CD14-positive monocyte (primary cell): ENCODE measurements at regions of chr7 and their contacts with region 1.

Region 1: DNA sequence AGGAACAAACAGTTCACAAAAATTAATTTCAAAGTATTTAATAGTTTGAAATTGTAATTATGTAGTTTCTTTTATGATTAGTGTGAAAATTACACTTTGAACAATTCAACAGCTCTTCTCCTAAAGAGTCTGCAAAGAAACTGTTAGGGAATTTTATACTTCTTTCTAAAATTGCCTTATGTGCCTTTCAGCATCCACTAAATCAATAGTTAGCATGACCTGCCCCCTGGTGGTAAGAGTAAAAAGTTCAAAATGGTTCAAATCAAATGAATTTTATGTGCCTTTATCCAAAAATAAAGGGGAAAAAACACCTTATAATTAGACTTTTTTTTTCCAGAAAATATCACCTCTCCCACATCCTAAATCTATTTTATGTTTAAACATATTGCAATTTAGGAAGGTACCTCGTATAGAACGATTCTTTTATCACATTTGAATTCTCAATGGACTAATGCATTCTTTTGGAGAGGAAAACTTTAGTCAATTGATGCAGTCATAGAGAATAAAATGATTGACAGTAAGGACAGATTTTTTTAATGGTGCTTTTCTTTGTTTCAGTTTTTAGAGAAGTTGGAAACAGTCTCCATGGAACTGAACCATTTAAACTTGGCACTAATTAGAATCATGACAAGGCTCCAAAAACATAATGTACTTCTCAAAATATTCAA is 163.7 kb downstream of the SEMA3D start:
- DNase-seq: peak in 2 of 3 donors; percentile 7 to 17
- H3K4me3 ChIP-seq: no peak overlapping the region
- H3K4me3 Mint-ChIP-seq: no peak overlapping the region
- H3K27ac ChIP-seq: no peak overlapping the region
- H3K27ac Mint-ChIP-seq: no peak overlapping the region
- H3K4me1 ChIP-seq: no peaks in the 10 kb centered on the region
- H3K4me1 Mint-ChIP-seq: no peaks in the 10 kb centered on the region
- H3K27me3 ChIP-seq: no peaks in the 10 kb centered on the region
- H3K27me3 Mint-ChIP-seq: peaks cover 0 to 3% (median 0%) of the 10 kb centered on the region in 3 donors
- CTCF ChIP-seq: peak; percentile 78

Region 2: GRCh38 chr7:83976295-83976694 is 1046.9 kb before region 1 on chr7:
- intact Hi-C with region 1: loop called (anchors 5 kb)
- DNase-seq: peak; percentile 9 to 50 (median 22)
- H3K4me3 ChIP-seq: no peak overlapping the region
- H3K4me3 Mint-ChIP-seq: no peak overlapping the region
- H3K27ac ChIP-seq: no peak overlapping the region
- H3K27ac Mint-ChIP-seq: no peak overlapping the region
- H3K4me1 ChIP-seq: no peaks in the 10 kb centered on the region
- H3K4me1 Mint-ChIP-seq: no peaks in the 10 kb centered on the region
- H3K27me3 ChIP-seq: no peaks in the 10 kb centered on the region
- H3K27me3 Mint-ChIP-seq: peaks cover 0 to 4% (median 0%) of the 10 kb centered on the region in 3 donors
- CTCF ChIP-seq: peak; percentile 81